Posterior cingulate gyrus (tissue), 11 donors: ENCODE measurements at regions of chr2 and their contacts with region 1.

Region 1: GRCh38 chr2:79219383-79219988 is 59.9 kb upstream of the REG3A start:
- DNase-seq: peak in 2 of 10 donors; percentile 22 to 34

Region 2: GRCh38 chr2:79041032-79041448 is 178.4 kb before region 1 on chr2:
- intact Hi-C with region 1: loop called (anchors 5 kb)
- DNase-seq: no peak

Region 3: DNA sequence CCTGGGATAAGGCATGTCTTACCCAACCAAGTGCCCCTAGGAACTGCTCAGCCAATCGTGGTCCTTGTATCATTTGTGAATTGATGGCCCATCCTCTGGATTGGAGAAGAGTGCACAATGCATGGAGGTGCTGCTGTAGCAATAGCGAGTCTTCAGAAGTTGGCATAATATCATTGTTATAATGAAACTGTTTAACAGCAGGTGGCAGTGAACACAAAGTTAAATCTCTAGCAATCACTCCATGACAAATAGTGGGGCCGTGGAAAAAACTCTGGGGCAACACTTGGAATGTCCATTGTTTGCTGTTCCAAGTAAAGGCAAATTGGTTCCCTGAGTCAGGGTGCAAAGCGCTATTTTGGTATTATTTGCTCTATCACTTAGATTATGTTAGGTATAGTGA is 87.8 kb before region 1 on chr2:
- intact Hi-C with region 1: loop called (anchors 2 kb)
- DNase-seq: no peak

Region 4: GRCh38 chr2:79860228-79861058 is 641.0 kb after region 1 on chr2:
- intact Hi-C with region 1: loop called (anchors 5 kb)
- DNase-seq: peak in 2 of 10 donors; percentile 15 to 34